Endothelial cell of umbilical vein (primary cell): ENCODE measurements at regions of chr22 and their contacts with region 1.

Region 1: DNA sequence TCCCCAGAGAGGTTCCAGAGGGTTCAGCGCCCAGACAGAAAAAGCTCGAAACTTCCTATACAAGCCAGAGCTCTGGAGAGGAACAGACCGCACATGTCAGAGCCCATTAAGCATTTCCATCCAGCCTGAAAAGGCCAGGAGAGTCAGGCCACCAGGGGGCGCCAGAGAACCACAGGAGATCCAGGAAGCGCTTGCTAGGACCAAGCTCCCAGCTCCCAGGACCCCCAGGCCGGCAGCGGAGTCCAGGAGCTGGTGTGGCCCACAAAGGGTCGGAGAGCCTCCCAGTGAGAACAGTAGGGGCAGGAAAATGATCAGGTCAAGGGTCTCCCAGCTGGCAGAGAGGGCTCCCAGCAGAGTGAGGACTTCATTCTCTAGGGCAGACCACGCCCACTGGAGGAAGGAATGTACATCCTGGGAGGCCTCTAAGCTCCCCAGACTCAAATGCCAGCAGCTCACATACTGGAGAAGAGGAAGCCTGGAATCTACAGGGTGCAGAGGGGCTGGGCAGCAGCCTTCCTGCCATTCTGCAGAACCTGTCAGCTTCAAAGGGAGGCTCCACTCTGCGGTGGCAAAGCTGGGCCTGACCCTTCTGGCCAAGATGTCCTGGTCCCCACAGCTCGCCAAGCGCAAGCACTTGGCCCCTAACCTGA is 2.1 kb upstream of the MEI1 start:
- DNase-seq: peak; percentile 87
- H3K4me3 ChIP-seq: no peak overlapping the region
- H3K27ac ChIP-seq: no peak overlapping the region
- H3K4me1 ChIP-seq: peaks cover 3% of the 10 kb centered on the region
- H3K27me3 ChIP-seq: no peaks in the 10 kb centered on the region
- CTCF ChIP-seq: peak; percentile 98 to 99
- POLR2A ChIP-seq: no peak

Region 2: DNA sequence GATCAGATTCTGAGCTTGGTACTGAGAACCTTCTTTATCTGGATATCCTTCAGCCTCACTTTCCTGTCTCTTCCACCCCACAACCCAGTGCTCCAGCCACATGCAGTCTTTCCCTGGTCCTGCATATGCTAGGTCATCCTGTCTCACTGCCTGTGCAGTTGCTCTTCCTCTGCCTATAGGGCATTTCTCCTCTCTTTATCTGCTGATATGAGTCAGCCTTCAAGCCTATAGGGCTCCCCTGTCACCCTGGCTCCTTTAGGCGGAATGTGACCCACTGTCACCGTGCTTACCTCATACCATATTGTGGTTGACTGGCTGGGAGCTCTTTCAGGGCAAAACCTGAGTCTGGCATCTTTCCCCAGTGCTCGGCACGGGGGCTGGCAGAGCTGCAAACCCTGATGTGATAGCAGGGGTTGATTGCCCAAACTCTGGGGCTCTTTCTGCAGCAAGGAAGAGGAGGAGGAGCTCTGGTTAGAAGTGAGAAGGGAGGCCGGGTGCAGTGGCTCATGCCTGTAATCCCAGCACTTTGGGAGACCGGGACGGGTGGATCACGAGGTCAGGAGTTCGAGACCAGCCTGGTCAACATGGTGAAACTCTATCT is 28.4 kb after region 1 on chr22:
- CTCF ChIA-PET with region 1: interaction called, 10 read pairs
- POLR2A ChIA-PET with region 1: no interaction called
- dilution Hi-C with region 1: no loop called
- intact Hi-C with region 1: no loop called
- DNase-seq: no peak
- H3K4me3 ChIP-seq: no peak overlapping the region
- H3K27ac ChIP-seq: no peak overlapping the region
- H3K4me1 ChIP-seq: no peaks in the 10 kb centered on the region
- H3K27me3 ChIP-seq: peaks cover 1 to 5% of the 10 kb centered on the region in 2 experiments
- CTCF ChIP-seq: no peak
- POLR2A ChIP-seq: no peak

Region 3: DNA sequence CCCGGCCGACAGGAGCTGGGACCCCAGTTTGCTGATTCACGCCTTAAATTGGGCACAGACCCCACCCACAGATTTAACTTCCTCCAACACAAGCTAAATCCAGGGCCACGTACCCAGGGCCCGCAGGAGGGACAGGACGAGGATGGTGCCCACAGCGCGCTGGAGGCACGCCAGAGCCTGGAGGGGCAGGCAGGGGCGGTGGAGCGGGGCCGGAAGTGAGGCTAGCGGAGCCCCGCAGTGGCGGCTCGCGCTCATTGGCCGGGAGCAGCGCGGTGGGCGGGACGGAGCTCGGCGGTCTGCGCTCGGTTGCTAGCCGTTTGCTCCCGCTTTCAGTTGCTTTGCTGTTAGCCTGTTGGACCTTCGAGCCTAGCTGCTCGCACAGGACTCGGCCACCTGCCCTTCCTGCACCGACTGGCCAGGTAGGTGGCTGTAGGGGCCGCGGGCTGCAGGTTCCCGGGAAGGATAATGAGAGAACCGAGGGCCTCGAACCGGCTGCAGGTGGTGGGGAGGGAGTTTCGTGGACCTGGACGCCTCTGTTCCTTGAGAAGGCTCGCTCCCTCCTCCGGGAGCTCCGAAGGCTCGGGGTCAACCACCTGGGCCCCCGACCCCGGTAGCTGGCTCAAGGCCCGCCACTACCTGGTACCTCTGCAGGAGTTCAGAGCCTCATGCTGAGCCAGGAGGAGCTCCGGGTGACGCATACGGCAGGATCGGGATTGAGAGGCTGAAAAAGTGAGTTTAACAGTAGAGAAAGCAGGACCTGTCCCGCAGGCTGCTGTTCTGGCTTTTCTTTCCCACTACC is 103.3 kb after region 1 on chr22 and contains the start of gene CCDC134:
- CTCF ChIA-PET with region 1: interaction called, 28 read pairs
- POLR2A ChIA-PET with region 1: no interaction called
- dilution Hi-C with region 1: no loop called
- intact Hi-C with region 1: loop called (anchors 5 kb)
- DNase-seq: peak; percentile 84
- H3K4me3 ChIP-seq: peak within 1 kb of the TSS; percentile 62 to 83 (median 78)
- H3K27ac ChIP-seq: peak within 1 kb of the TSS; percentile 21
- H3K4me1 ChIP-seq: peaks cover 16% of the 10 kb centered on the region
- H3K27me3 ChIP-seq: no peaks in the 10 kb centered on the region
- CTCF ChIP-seq: no peak
- POLR2A ChIP-seq: peak; percentile 93
- total RNA-seq, gene CCDC134: 8.1 and 8.4 TPM in 2 replicates

Region 4: GRCh38 chr22:41857155-41857859 is 160.1 kb after region 1 on chr22:
- CTCF ChIA-PET with region 1: interaction called, 61 read pairs
- POLR2A ChIA-PET with region 1: interaction called, 12 read pairs
- dilution Hi-C with region 1: no loop called
- intact Hi-C with region 1: loop called (anchors 1 kb)
- DNase-seq: peak; percentile 70
- H3K4me3 ChIP-seq: no peak overlapping the region
- H3K27ac ChIP-seq: no peak overlapping the region
- H3K4me1 ChIP-seq: peaks cover 10% of the 10 kb centered on the region
- H3K27me3 ChIP-seq: no peaks in the 10 kb centered on the region
- CTCF ChIP-seq: peak; percentile 60 to 65
- POLR2A ChIP-seq: no peak

Region 5: GRCh38 chr22:41946629-41947423 is 249.6 kb after region 1 on chr22 and contains the start of gene CENPM:
- CTCF ChIA-PET with region 1: interaction called, 127 read pairs
- POLR2A ChIA-PET with region 1: no interaction called
- dilution Hi-C with region 1: no loop called
- intact Hi-C with region 1: loop called (anchors 1 kb)
- DNase-seq: peak; percentile 96
- H3K4me3 ChIP-seq: peak within 1 kb of the TSS; percentile 39 to 85 (median 57)
- H3K27ac ChIP-seq: peak within 1 kb of the TSS; percentile 44
- H3K4me1 ChIP-seq: peaks cover 33% of the 10 kb centered on the region
- H3K27me3 ChIP-seq: no peaks in the 10 kb centered on the region
- CTCF ChIP-seq: no peak
- POLR2A ChIP-seq: no peak
- total RNA-seq, gene CENPM: 30.4 and 34.5 TPM in 2 replicates

Region 6: DNA sequence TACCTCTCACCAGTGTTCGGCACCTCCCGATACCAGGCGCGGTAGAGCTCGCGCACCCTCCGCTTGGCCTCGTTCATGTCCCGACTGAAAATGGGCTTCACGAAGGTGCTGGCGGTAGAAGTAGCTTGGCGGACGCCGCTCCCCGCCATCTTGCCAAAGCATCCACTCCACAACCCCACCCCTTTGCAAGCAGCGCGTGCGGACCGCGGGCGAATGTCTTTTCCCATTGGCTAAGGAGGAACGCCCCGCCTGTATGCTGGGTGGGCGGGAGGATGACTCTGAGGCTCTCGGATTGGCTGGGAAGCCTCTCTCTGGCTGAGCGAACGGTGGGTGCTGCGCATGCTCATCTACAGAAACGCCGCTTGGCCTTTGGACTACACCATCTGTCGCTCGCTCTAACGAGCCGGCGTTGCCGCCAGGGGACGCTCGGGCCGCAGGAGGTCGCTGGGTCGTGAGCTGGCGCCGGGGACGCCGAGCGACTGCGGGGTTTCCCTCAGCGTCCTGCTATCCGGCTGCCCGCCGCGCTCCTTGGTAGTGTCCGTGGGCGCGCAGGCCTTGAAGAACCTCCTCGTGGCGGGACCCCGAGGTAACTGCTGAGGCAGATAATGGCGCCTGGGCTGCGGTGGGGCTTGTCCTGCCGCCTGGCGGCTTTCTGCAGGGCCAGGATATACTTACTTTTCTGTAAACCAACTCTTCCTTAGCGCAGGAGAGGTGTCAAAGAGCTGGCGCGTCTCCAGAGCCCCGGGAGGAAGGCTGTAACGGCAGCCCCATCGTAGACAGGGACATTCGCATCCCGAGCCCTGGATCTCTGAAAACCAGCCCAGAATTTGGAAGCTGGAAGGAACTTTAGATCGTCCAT is 393.6 kb after region 1 on chr22 and contains the start of gene NDUFA6:
- CTCF ChIA-PET with region 1: interaction called, 7 read pairs
- POLR2A ChIA-PET with region 1: no interaction called
- dilution Hi-C with region 1: no loop called
- intact Hi-C with region 1: loop called (anchors 2 kb)
- DNase-seq: peak; percentile 100
- H3K4me3 ChIP-seq: peak within 1 kb of the TSS; percentile 51 to 77 (median 72)
- H3K27ac ChIP-seq: peak within 1 kb of the TSS; percentile 69
- H3K4me1 ChIP-seq: peaks cover 8% of the 10 kb centered on the region
- H3K27me3 ChIP-seq: no peaks in the 10 kb centered on the region
- CTCF ChIP-seq: peak; percentile 91 to 97
- POLR2A ChIP-seq: peak; percentile 88
- total RNA-seq, gene NDUFA6: 84.9 and 95.7 TPM in 2 replicates